Caco-2 (cell line): ENCODE measurements at regions of chr7 and their contacts with region 1.

Region 1: DNA sequence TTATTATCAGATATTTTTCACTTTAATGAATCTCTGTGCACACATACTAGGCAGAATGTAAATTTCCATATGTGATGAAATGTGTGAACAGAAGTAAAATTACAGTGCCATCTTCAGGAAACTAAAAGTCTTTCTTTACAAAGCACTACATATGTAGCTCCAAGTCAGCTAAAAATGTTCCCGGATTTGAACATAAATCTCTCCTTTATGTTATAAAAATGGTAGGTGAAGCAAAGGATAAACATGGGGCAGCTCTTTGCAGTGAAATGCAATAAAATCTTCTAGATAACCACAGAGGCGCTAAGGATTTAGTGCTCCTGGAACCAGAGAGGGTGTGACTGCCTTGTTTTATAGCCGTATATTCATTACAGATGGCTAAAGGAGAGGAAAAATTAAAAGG is 104.9 kb upstream of the C7orf33 start:
- DNase-seq: no peak
- H3K4me3 ChIP-seq: no peak overlapping the region
- H3K4me3 Mint-ChIP-seq: no peak overlapping the region
- H3K27ac Mint-ChIP-seq: no peak overlapping the region
- H3K4me1 ChIP-seq: peaks cover 14% of the 10 kb centered on the region
- H3K4me1 Mint-ChIP-seq: peaks cover 22% of the 10 kb centered on the region
- H3K27me3 ChIP-seq: no peaks in the 10 kb centered on the region
- H3K27me3 Mint-ChIP-seq: no peaks in the 10 kb centered on the region
- CTCF ChIP-seq: no peak

Region 2: GRCh38 chr7:148270586-148270985 is 215.0 kb before region 1 on chr7:
- CTCF ChIA-PET with region 1: interaction called, 21 read pairs
- POLR2A ChIA-PET with region 1: no interaction called
- intact Hi-C with region 1: loop called (anchors 1 kb)
- DNase-seq: peak; percentile 58 to 66
- H3K4me3 ChIP-seq: no peak overlapping the region
- H3K4me3 Mint-ChIP-seq: peak overlapping the region; percentile 49
- H3K27ac Mint-ChIP-seq: peak overlapping the region; percentile 54
- H3K4me1 ChIP-seq: peaks cover 30% of the 10 kb centered on the region
- H3K4me1 Mint-ChIP-seq: peaks cover 26% of the 10 kb centered on the region
- H3K27me3 ChIP-seq: no peaks in the 10 kb centered on the region
- H3K27me3 Mint-ChIP-seq: no peaks in the 10 kb centered on the region
- CTCF ChIP-seq: no peak

Region 3: GRCh38 chr7:148390381-148390780 is 95.2 kb before region 1 on chr7:
- CTCF ChIA-PET with region 1: no interaction called
- POLR2A ChIA-PET with region 1: no interaction called
- intact Hi-C with region 1: loop called (anchors 1 kb)
- DNase-seq: no peak
- H3K4me3 ChIP-seq: no peak overlapping the region
- H3K4me3 Mint-ChIP-seq: no peak overlapping the region
- H3K27ac Mint-ChIP-seq: no peak overlapping the region
- H3K4me1 ChIP-seq: no peaks in the 10 kb centered on the region
- H3K4me1 Mint-ChIP-seq: no peaks in the 10 kb centered on the region
- H3K27me3 ChIP-seq: no peaks in the 10 kb centered on the region
- H3K27me3 Mint-ChIP-seq: no peaks in the 10 kb centered on the region
- CTCF ChIP-seq: no peak